Right ventricle myocardium inferior (tissue), 1 donor: ENCODE measurements at regions of chr4 and their contacts with region 1.

Region 1: DNA sequence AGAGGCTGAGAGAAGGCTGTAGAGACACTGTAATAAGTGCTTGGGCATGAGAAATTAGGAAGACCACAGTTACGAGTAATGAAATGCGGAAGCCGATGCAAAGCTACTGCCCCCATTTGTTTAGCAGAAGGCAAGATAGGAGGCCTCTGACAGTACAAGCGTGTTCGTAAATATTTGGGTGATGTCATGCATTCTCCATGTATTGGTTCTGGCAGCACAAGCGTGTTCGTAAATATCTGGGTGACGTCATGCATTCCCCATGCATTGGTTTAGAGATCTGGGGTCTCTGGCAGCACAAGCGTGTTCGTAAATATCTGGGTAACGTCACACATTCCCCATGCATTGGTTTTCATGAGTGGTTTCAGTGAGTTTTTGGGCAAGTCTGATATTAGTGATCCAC is 661.5 kb upstream of the FRG1 start:
- DNase-seq: no peak
- ATAC-seq: no peak

Region 2: GRCh38 chr4:189237340-189237739 is 41.9 kb before region 1 on chr4:
- intact Hi-C with region 1: no loop called
- DNase-seq: no peak
- ATAC-seq: no peak

Region 3: GRCh38 chr4:189265515-189265914 is 13.7 kb before region 1 on chr4:
- intact Hi-C with region 1: loop called (anchors 1 kb)
- DNase-seq: no peak
- ATAC-seq: no peak